OCI-LY7 (cell line): ENCODE measurements at regions of chr7 and their contacts with region 1.

Region 1: GRCh38 chr7:4681886-4682620 is at the start of gene FOXK1:
- DNase-seq: peak; percentile 86
- H3K4me3 ChIP-seq: peak within 1 kb of the TSS; percentile 96
- H3K27ac ChIP-seq: peak within 1 kb of the TSS; percentile 51
- H3K4me1 ChIP-seq: peaks cover 21% of the 10 kb centered on the region
- CTCF ChIP-seq: no peak
- total RNA-seq, gene FOXK1: 13.8 and 17.3 TPM in 2 replicates

Region 2: GRCh38 chr7:4610768-4611467 is 71.1 kb before region 1 on chr7:
- CTCF ChIA-PET with region 1: no interaction called
- POLR2A ChIA-PET with region 1: no interaction called
- intact Hi-C with region 1: loop called (anchors 1 kb)
- DNase-seq: peak; percentile 69
- H3K4me3 ChIP-seq: no peak overlapping the region
- H3K27ac ChIP-seq: no peak overlapping the region
- H3K4me1 ChIP-seq: peaks cover 3% of the 10 kb centered on the region
- CTCF ChIP-seq: peak; percentile 83

Region 3: GRCh38 chr7:4641667-4642467 is 40.2 kb before region 1 on chr7:
- CTCF ChIA-PET with region 1: interaction called, 3 read pairs
- POLR2A ChIA-PET with region 1: interaction called, 12 read pairs
- intact Hi-C with region 1: loop called (anchors 1 kb)
- DNase-seq: peak; percentile 97
- H3K4me3 ChIP-seq: peak overlapping the region; percentile 72
- H3K27ac ChIP-seq: peak overlapping the region; percentile 59
- H3K4me1 ChIP-seq: peaks cover 9% of the 10 kb centered on the region
- CTCF ChIP-seq: peak; percentile 54

Region 4: GRCh38 chr7:4744391-4745264 is 62.6 kb after region 1 on chr7:
- CTCF ChIA-PET with region 1: no interaction called
- POLR2A ChIA-PET with region 1: no interaction called
- intact Hi-C with region 1: loop called (anchors 5 kb)
- DNase-seq: peak; percentile 64
- H3K4me3 ChIP-seq: peak overlapping the region; percentile 53
- H3K27ac ChIP-seq: peak overlapping the region; percentile 64
- H3K4me1 ChIP-seq: peaks cover 27% of the 10 kb centered on the region
- CTCF ChIP-seq: no peak

Region 5: DNA sequence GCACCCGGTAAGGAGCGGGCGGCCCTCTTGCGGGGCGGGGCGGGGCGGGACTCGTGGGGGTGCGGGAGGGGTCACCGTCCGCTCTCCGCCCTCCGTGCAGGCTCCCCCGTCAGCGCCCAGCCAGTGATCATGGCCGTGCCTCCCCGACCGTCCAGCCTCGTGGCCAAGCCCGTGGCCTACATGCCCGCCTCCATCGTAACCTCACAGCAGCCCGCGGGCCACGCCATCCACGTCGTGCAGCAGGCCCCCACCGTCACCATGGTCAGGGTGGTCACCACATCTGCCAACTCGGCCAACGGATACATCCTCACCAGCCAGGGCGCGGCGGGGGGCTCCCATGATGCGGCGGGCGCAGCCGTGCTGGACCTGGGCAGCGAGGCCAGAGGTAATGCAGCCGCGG is 77.2 kb after region 1 on chr7:
- CTCF ChIA-PET with region 1: no interaction called
- POLR2A ChIA-PET with region 1: no interaction called
- intact Hi-C with region 1: no loop called
- DNase-seq: no peak
- H3K4me3 ChIP-seq: no peak overlapping the region
- H3K27ac ChIP-seq: no peak overlapping the region
- H3K4me1 ChIP-seq: no peaks in the 10 kb centered on the region
- CTCF ChIP-seq: no peak